Activated CD8-positive, alpha-beta memory T cell treated with anti-CD3 and anti-CD28 coated beads, Interleukin-2, amount 10 ng/mL, durations not matched to agents 7 days and 5 days (primary cell): ENCODE measurements at regions of chr1 and their contacts with region 1.

Region 1: DNA sequence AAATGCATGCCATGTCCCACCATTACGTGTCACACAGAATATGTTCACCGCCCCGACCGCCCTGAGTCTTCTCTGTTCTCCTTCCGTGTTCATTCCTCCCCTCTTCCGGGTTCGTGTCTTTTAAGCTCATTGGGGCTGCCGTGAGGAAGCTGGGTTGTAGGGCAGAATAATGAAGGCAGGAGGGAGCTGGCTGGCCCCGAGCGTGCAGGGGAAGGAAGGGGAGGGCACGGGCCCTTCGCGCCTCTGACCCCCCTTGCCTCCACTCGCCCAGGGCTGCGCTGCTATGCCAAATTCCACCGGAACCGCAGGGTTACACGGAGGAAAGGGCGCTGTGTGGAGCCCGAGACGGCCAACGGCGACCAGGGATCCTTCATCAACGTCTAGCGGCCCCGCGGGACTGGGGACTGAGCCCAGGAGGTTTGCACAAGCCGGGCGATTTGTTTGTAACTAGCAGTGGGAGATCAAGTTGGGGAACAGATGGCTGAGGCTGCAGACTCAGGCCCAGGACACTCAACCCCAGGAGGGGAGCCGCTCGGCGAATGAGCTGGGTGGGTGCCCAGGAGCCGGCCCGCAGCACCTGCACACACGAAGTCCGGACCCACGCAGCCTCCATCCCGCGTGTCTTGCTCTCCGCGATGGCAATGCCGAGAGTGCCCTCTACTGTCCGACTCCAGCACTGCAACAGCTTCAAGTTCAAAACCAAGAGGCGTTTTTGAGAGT is 16.5 kb upstream of the AGTRAP start:
- DNase-seq: peak; percentile 89
- ATAC-seq: peak; percentile 92
- H3K4me3 Mint-ChIP-seq: peak overlapping the region; percentile 72
- H3K27ac Mint-ChIP-seq: peak overlapping the region; percentile 96
- H3K4me1 Mint-ChIP-seq: peaks cover 16% of the 10 kb centered on the region
- H3K27me3 Mint-ChIP-seq: peaks cover 3% of the 10 kb centered on the region

Region 2: DNA sequence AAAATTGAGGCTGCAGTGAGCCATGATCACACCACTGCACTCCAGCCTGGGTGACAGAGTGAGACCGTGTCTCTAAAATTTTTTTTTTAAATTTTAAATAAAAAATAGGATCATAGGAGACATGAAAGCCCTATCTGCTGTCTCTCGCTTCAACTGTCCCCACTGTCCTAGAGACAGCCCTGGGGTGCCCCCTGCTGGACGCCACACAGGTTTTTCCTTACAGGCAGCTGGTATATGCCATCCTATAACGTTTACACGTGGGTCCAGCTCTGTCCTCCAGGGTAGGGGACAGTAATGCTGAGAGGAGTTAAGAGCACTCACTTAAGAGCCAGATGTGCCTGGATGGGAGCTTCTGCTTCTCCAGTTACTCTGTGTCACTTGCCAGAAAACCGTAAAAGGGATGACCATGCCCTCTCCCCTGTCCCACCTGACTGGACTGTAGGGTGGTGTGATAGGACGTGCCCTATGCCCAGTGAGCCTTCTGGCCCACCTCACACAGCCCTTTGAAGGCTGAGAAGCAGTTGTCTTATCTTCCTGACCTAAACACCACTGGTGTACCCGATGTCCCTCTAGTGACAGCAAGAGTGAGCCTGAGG is 73.7 kb before region 1 on chr1:
- CTCF ChIA-PET with region 1: interaction called, 214 read pairs
- DNase-seq: peak; percentile 87
- ATAC-seq: peak; percentile 52
- H3K4me3 Mint-ChIP-seq: no peak overlapping the region
- H3K27ac Mint-ChIP-seq: no peak overlapping the region
- H3K4me1 Mint-ChIP-seq: peaks cover 17% of the 10 kb centered on the region
- H3K27me3 Mint-ChIP-seq: peaks cover 10% of the 10 kb centered on the region

Region 3: GRCh38 chr1:11681071-11681771 is 38.3 kb before region 1 on chr1 and contains the start of gene MAD2L2:
- CTCF ChIA-PET with region 1: interaction called, 24 read pairs
- DNase-seq: peak; percentile 93
- ATAC-seq: peak; percentile 91
- H3K4me3 Mint-ChIP-seq: peak within 1 kb of the TSS; percentile 86
- H3K27ac Mint-ChIP-seq: peak within 1 kb of the TSS; percentile 93
- H3K4me1 Mint-ChIP-seq: peaks cover 22% of the 10 kb centered on the region
- H3K27me3 Mint-ChIP-seq: peaks cover 23% of the 10 kb centered on the region
- total RNA-seq, gene MAD2L2: 85.4 to 94.8 TPM

Region 4: GRCh38 chr1:11707621-11708276 is 11.7 kb before region 1 on chr1:
- CTCF ChIA-PET with region 1: interaction called, 17 read pairs
- DNase-seq: no peak
- ATAC-seq: no peak
- H3K4me3 Mint-ChIP-seq: no peak overlapping the region
- H3K27ac Mint-ChIP-seq: no peak overlapping the region
- H3K4me1 Mint-ChIP-seq: no peaks in the 10 kb centered on the region
- H3K27me3 Mint-ChIP-seq: peaks cover 36% of the 10 kb centered on the region

Region 5: DNA sequence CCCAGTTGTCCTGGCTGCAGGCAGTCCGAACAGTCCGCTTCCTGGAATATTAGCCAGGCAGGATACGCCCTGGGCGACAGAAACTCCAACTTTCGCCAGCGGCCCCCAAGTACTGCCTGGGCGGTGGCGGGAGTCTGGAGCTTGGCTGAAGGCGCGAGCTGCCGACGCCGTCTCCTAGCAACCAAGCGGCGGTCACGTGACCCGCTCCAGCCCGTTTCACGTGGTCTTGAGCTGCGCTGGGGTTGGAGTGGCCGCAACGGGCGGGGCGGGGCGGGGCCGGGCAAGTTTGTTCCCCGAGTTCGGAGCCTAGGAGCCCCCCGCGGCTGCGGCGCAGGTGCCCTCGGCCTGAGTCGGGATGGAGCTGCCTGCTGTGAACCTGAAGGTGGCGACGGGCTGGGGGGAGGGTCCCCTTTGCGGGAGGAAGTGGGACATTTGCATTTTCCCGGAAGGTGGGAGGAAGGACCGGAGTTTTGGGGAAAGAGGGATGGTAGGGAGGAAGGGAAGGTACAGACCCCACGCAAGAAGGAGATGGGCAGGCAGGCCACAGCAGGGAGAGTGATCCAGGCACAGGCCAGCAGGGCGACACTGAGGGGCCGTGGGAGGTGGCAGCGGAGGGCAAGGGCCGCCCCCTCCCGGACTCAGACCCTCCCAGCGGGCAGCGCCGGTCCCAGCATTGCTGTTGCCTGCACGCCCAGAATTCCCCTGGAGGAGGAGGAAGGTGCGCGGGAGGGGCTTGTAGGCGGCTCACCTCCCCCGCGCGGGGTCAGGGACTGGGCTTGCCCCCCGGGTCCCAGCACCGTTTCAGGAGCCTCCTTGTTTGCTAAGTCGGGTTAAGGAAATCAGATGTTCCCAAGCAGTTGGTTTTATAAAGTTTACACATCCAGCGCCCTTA is 16.6 kb after region 1 on chr1 and contains the start of gene AGTRAP:
- CTCF ChIA-PET with region 1: interaction called, 31 read pairs
- DNase-seq: peak; percentile 95
- ATAC-seq: peak; percentile 80
- H3K4me3 Mint-ChIP-seq: peak within 1 kb of the TSS; percentile 93
- H3K27ac Mint-ChIP-seq: peak within 1 kb of the TSS; percentile 87
- H3K4me1 Mint-ChIP-seq: peaks cover 62% of the 10 kb centered on the region
- H3K27me3 Mint-ChIP-seq: no peaks in the 10 kb centered on the region
- total RNA-seq, gene AGTRAP: 45.5 to 59.9 TPM

Region 6: DNA sequence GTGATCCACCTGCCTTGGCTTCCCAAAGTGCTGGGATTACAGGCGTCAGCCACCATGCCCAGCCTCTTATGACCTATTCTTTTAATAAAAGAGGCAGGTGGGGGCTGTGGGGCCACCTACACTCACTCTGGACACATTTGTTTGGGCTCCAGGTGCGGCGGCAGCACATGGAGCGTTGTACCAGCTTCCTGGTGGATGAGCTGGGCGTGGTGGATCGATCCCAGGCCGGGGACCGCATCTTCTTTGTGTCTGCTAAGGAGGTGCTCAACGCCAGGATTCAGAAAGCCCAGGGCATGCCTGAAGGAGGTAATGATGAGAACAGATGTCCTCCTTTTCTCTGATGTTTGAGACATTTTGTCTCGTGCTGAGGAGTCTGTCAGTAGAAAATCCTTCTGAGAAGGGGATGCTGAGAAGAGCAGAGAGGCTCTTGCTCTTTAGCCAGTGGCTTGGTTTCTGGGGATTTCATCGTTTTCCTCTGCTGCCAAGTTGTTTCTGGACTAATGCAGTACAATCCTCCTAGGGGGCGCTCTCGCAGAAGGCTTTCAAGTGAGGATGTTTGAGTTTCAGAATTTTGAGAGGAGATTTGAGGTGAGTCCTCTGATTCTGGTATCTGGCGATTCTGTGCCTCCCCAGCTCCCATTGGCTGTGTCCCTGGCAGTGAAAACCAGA is 281.9 kb after region 1 on chr1:
- CTCF ChIA-PET with region 1: no interaction called
- DNase-seq: peak; percentile 72
- ATAC-seq: no peak
- H3K4me3 Mint-ChIP-seq: no peak overlapping the region
- H3K27ac Mint-ChIP-seq: peak overlapping the region; percentile 54
- H3K4me1 Mint-ChIP-seq: peaks cover 7% of the 10 kb centered on the region
- H3K27me3 Mint-ChIP-seq: no peaks in the 10 kb centered on the region